ENCODE measurements at regions of chr2 and their contacts with region 1.

Region 1: DNA sequence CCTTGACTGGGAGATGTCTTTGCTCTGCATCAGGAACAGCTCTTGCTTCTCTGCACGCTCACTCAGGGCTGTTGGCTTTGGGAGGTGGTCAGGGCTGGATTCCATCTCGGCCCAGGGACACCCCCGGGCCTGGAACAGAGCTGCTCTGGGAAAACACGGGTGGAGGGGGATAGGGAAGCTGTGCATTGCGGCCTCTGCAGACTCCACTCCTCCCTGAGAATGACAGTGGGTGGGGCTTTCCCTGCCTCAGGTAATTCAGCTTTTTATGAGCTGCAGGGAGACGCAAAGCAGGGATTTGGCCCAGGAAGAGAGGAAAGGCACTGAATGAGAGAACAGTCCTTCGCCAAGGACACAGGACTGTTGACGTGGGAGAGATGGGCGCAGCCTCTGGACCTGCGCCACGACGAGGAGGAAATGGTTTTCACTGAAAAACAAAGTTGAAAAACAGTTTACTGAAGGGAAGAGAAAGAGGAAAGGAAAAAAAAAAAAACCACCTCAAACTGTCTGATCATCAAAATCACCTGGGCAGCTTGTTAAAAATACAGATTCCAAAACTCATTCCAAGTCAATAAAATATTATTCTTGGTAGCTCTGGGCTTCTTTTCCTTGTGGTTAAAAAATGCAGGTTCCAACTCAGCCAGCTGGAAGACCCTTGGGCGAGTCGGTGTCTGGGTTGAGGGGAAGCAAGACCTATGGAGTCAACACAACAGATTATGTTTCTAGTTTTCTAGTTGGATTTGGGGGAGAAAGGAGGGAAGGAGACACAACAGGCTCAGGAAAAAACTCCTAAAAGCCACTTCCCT is 194.0 kb downstream of the ZFP36L2 start:
- DNase-seq: peak; percentile 61 to 74
- ATAC-seq: peak; percentile 54 to 88 (median 80)
- H3K4me3 ChIP-seq: no peak overlapping the region
- H3K27ac ChIP-seq: peak overlapping the region; percentile 21 to 79 (median 72)
- H3K4me1 ChIP-seq: peaks cover 11 to 28% (median 19%) of the 10 kb centered on the region in 9 donors
- H3K27me3 ChIP-seq: no peaks in the 10 kb centered on the region
- CTCF ChIP-seq: no peak

Region 2: GRCh38 chr2:43073368-43073767 is 41.0 kb after region 1 on chr2:
- intact Hi-C with region 1: loop called in 1 of 10 experiments (anchors 5 kb)
- DNase-seq: peak in 1 of 2 donors; percentile 41
- ATAC-seq: peak in 5 of 8 donors; percentile 6 to 54 (median 16)
- H3K4me3 ChIP-seq: no peak overlapping the region
- H3K27ac ChIP-seq: peak overlapping the region; percentile 37 to 95 (median 75)
- H3K4me1 ChIP-seq: peaks cover 51 to 90% (median 67%) of the 10 kb centered on the region in 9 donors
- H3K27me3 ChIP-seq: no peaks in the 10 kb centered on the region
- CTCF ChIP-seq: no peak

Region 3: DNA sequence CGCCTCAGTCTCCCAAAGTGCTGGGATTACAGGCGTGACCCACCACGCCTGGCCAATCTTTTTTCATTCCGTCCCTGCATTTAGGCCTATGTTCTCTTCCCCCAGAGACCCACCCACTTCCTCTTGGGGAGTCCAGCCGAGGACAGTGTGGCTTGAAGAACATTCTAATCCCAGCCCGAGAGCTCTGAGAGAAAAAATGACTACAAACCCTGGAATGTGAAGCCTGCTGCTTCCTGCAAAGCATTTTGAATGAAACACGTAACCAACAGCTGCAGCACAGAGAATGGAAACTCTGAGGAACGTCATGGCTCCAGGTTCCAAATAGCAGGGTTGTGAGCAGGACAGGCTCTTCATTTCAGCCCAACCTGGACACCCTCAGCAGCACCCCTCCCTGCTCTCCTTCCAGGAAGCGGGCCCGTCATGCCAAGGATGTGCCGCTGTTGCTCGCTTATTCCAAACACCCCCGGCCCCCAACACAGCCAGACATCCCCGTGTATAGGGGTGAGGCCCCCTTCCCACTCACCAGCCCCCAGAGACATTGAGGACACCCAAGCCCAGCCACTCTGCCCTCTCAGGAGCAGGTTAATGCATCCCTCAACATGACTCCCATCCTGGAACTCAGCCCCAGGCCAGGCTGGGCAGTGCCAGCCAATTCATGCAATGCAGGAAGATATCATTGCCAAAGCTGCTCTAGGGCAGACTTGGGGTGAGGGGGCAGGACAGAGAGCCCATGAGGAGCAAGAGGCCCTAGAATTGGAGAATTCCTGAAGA is 54.2 kb after region 1 on chr2:
- intact Hi-C with region 1: loop called in 1 of 10 experiments (anchors 5 kb)
- DNase-seq: peak; percentile 51 to 88
- ATAC-seq: peak; percentile 75 to 89 (median 84)
- H3K4me3 ChIP-seq: no peak overlapping the region
- H3K27ac ChIP-seq: peak overlapping the region; percentile 76 to 93 (median 90)
- H3K4me1 ChIP-seq: peaks cover 48 to 67% (median 61%) of the 10 kb centered on the region in 9 donors
- H3K27me3 ChIP-seq: no peaks in the 10 kb centered on the region
- CTCF ChIP-seq: no peak

Region 4: DNA sequence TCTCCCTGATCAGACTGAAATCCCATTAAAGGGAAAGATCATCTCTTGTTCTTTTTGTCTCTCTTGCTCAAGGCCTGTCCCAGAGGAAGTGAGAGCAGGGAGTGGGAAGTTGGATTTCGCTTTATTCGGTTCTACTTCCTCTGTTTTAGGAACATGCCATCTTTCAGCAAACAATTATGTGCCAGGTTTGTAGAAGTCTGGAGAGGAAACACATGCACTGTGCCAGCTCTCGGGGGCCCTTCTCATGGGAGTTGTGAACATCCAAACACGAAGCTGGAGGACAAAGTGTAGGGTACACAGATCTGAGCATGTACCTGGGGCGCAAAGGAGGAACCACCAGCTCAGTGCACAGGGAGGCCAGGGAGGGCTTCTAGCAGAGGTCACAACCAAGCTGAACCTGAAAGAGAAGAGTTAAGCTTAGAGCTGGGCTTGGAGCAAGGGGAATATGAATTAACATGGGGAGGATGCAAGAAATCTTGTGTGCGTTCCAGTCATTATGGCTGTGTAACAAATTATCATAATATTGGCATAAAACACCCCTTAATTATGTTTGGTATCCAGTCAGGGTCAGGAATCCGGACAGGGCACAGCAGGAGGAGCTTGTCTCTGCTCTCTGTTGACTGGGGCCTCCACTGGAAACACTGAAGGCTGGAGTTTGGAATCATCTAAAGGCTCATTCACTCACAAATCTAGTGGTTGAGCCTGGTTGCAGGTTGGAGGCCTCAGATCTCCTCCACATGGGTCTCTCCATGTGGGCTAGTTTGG is 65.4 kb after region 1 on chr2:
- intact Hi-C with region 1: no loop called
- DNase-seq: no peak
- ATAC-seq: peak in 1 of 8 donors; percentile 3
- H3K4me3 ChIP-seq: no peak overlapping the region
- H3K27ac ChIP-seq: peak overlapping the region in 4 of 10 donors; percentile 18 to 65 (median 34)
- H3K4me1 ChIP-seq: peaks cover 3 to 39% (median 17%) of the 10 kb centered on the region in 9 donors
- H3K27me3 ChIP-seq: no peaks in the 10 kb centered on the region
- CTCF ChIP-seq: no peak

Region 5: GRCh38 chr2:43199492-43200481 is 167.4 kb after region 1 on chr2:
- intact Hi-C with region 1: no loop called
- DNase-seq: no peak
- ATAC-seq: peak in 2 of 8 donors; percentile 21 to 35
- H3K4me3 ChIP-seq: no peak overlapping the region
- H3K27ac ChIP-seq: no peak overlapping the region
- H3K4me1 ChIP-seq: peaks cover 0 to 24% (median 0%) of the 10 kb centered on the region in 9 donors
- H3K27me3 ChIP-seq: no peaks in the 10 kb centered on the region
- CTCF ChIP-seq: no peak

Measured in heart right ventricle (tissue), 16 donors.